Activated T-helper 1 cell treated with anti-CD3 and anti-CD28 coated beads, Interleukin-12 subunit alpha, Interleukin-12 subunit beta, Interleukin-2, Interleukin-4 antibody, amounts not matched to agents 30 ng/mL and 10 ng/mL and 1 ng/mL, durations not matched to agents 14 hours and 24 hours and 36 hours (primary cell): ENCODE measurements at regions of chr14 and their contacts with region 1.

Region 1: DNA sequence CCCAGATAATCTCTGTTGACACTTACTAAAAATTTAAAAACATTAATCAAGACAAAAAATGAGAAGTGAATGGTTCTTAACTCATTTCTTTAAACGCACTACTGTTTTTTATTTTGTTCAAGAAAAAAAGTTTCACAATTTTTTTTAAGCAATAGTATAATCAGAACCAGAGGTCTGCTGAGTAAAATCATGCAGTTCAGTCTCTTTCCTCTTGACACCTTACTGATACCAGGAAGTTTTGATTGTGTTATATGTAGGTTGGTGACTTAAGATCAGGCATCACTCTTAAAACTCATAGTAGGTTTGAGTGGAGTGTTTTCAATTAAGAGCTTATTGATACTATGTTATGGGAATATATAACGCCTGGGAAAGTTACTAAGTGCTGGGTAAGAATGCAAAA is 121.4 kb downstream of the TRMT5 start:
- DNase-seq: no peak
- H3K4me3 Mint-ChIP-seq: no peak overlapping the region
- H3K27ac Mint-ChIP-seq: no peak overlapping the region
- H3K4me1 Mint-ChIP-seq: peaks cover 28% of the 10 kb centered on the region
- H3K27me3 Mint-ChIP-seq: peaks cover 2% of the 10 kb centered on the region

Region 2: GRCh38 chr14:60724137-60724619 is 135.3 kb before region 1 on chr14 and contains the start of gene SIX4:
- intact Hi-C with region 1: loop called (anchors 5 kb)
- DNase-seq: no peak
- H3K4me3 Mint-ChIP-seq: peak within 1 kb of the TSS; percentile 91
- H3K27ac Mint-ChIP-seq: peak within 1 kb of the TSS; percentile 67
- H3K4me1 Mint-ChIP-seq: peaks cover 25% of the 10 kb centered on the region
- H3K27me3 Mint-ChIP-seq: peaks cover 75% of the 10 kb centered on the region
- total RNA-seq, gene SIX4: 0.57 and 1.1 TPM in 2 replicates

Region 3: DNA sequence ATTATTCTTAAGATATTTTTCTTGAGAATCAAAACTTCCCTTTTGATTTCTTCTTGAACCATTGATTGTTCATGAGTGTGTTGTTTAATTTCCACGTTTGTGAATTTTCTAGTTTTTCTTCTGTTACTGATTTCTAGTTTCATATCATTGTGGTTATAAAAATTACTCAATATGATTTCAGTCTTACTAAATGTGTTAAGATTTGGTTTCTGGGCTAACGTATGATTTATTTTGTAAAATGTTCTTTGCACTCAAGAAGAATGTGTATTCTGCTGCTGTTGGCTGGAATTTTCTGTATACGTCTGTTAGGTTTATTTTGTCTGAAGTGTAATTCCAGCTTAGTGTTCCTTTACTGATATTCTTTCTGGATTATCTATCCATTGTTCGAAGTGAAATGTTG is 96.7 kb after region 1 on chr14:
- intact Hi-C with region 1: loop called (anchors 5 kb)
- DNase-seq: no peak
- H3K4me3 Mint-ChIP-seq: no peak overlapping the region
- H3K27ac Mint-ChIP-seq: no peak overlapping the region
- H3K4me1 Mint-ChIP-seq: peaks cover 10% of the 10 kb centered on the region
- H3K27me3 Mint-ChIP-seq: no peaks in the 10 kb centered on the region

Region 4: GRCh38 chr14:61234215-61234916 is 374.8 kb after region 1 on chr14:
- intact Hi-C with region 1: no loop called
- DNase-seq: no peak
- H3K4me3 Mint-ChIP-seq: no peak overlapping the region
- H3K27ac Mint-ChIP-seq: no peak overlapping the region
- H3K4me1 Mint-ChIP-seq: no peaks in the 10 kb centered on the region
- H3K27me3 Mint-ChIP-seq: peaks cover 3% of the 10 kb centered on the region